Activated CD4-positive, alpha-beta T cell treated with anti-CD3 and anti-CD28 coated beads for 36 hours (primary cell): ENCODE measurements at regions of chr3 and their contacts with region 1.

Region 1: GRCh38 chr3:196711838-196712513 is at the starts of genes CEP19 and PIGX:
- DNase-seq: peak; percentile 94
- ATAC-seq: peak; percentile 87
- H3K4me3 Mint-ChIP-seq: peak within 1 kb of the TSS; percentile 83
- H3K27ac Mint-ChIP-seq: peak within 1 kb of the TSS; percentile 96
- H3K4me1 Mint-ChIP-seq: peaks cover 33% of the 10 kb centered on the region
- H3K27me3 Mint-ChIP-seq: no peaks in the 10 kb centered on the region
- total RNA-seq, gene CEP19: 4.7 to 5.6 TPM
- total RNA-seq, gene PIGX: 37.8 to 42.2 TPM

Region 2: GRCh38 chr3:196432137-196432879 is 279.7 kb before region 1 on chr3 and contains the start of gene UBXN7:
- CTCF ChIA-PET with region 1: no interaction called
- POLR2A ChIA-PET with region 1: no interaction called
- intact Hi-C with region 1: loop called in 1 of 2 experiments (anchors 5 kb)
- DNase-seq: peak; percentile 98
- ATAC-seq: peak; percentile 89
- H3K4me3 Mint-ChIP-seq: peak within 1 kb of the TSS; percentile 79
- H3K27ac Mint-ChIP-seq: peak within 1 kb of the TSS; percentile 95
- H3K4me1 Mint-ChIP-seq: peaks cover 20% of the 10 kb centered on the region
- H3K27me3 Mint-ChIP-seq: no peaks in the 10 kb centered on the region
- total RNA-seq, gene UBXN7: 67.2 to 102 TPM

Region 3: GRCh38 chr3:196609343-196609775 is 102.6 kb before region 1 on chr3:
- CTCF ChIA-PET with region 1: interaction called, 4 read pairs
- POLR2A ChIA-PET with region 1: no interaction called
- intact Hi-C with region 1: loop called in 1 of 2 experiments (anchors 1 kb)
- DNase-seq: peak; percentile 98
- ATAC-seq: peak; percentile 93
- H3K4me3 Mint-ChIP-seq: peak overlapping the region; percentile 39
- H3K27ac Mint-ChIP-seq: peak overlapping the region; percentile 76
- H3K4me1 Mint-ChIP-seq: peaks cover 28% of the 10 kb centered on the region
- H3K27me3 Mint-ChIP-seq: no peaks in the 10 kb centered on the region

Region 4: GRCh38 chr3:196639483-196640296 is 72.3 kb before region 1 on chr3 and contains the start of gene NRROS:
- CTCF ChIA-PET with region 1: interaction called, 3 read pairs
- POLR2A ChIA-PET with region 1: no interaction called
- intact Hi-C with region 1: loop called in 1 of 2 experiments (anchors 1 kb)
- DNase-seq: peak; percentile 86
- ATAC-seq: peak; percentile 65
- H3K4me3 Mint-ChIP-seq: peak within 1 kb of the TSS; percentile 81
- H3K27ac Mint-ChIP-seq: peak within 1 kb of the TSS; percentile 98
- H3K4me1 Mint-ChIP-seq: peaks cover 62% of the 10 kb centered on the region
- H3K27me3 Mint-ChIP-seq: no peaks in the 10 kb centered on the region
- total RNA-seq, gene NRROS: 19.6 to 19.7 TPM

Region 5: GRCh38 chr3:196739671-196740480 is 27.9 kb after region 1 on chr3 and contains the start of gene PAK2:
- CTCF ChIA-PET with region 1: interaction called, 3 read pairs
- POLR2A ChIA-PET with region 1: interaction called, 10 read pairs
- intact Hi-C with region 1: loop called (anchors 1 kb)
- DNase-seq: peak; percentile 94
- ATAC-seq: peak; percentile 92
- H3K4me3 Mint-ChIP-seq: peak within 1 kb of the TSS; percentile 93
- H3K27ac Mint-ChIP-seq: peak within 1 kb of the TSS; percentile 99
- H3K4me1 Mint-ChIP-seq: peaks cover 25% of the 10 kb centered on the region
- H3K27me3 Mint-ChIP-seq: no peaks in the 10 kb centered on the region
- total RNA-seq, gene PAK2: 57.6 to 82.2 TPM

Region 6: DNA sequence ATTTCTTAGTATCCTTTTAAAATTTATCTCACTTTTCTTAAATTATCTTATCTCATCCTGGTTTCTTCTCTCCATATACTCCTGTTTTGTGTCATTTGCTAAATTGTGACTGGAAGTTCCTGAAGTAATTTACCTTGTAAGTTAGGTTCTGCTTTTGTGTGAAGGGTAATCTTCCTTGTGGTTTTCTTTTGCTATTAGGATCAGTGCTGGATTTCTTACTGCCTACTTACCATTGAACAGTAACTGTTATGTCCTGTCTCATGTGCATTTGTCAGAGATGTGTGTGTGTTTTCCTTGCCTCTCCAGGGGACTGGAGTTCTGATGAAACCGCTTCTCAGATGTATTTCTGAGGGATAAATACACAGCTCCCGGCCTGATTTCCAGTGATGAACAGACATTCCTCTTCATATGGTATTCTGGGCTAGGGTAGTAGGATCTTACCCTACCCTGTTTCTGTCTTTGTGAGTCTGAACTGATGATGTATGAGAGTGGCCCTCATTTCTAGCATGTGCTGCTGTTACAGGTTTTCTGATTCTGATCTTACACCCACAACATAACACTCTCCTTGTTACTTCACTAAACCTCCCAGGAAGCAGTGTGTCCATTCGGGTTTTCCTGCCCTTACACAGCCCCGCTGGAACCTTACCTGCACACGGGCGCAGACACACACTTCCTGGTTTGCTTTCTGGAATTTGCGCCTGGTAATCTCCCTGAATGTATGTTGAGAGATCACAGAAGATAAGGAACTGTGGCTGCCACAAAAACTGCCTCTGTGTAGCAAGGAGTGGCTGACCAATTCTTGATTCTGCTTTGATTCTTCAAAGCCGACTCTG is 42.3 kb after region 1 on chr3:
- CTCF ChIA-PET with region 1: no interaction called
- POLR2A ChIA-PET with region 1: no interaction called
- intact Hi-C with region 1: no loop called
- DNase-seq: no peak
- ATAC-seq: no peak
- H3K4me3 Mint-ChIP-seq: no peak overlapping the region
- H3K27ac Mint-ChIP-seq: peak overlapping the region; percentile 38
- H3K4me1 Mint-ChIP-seq: peaks cover 55% of the 10 kb centered on the region
- H3K27me3 Mint-ChIP-seq: no peaks in the 10 kb centered on the region

Region 7: DNA sequence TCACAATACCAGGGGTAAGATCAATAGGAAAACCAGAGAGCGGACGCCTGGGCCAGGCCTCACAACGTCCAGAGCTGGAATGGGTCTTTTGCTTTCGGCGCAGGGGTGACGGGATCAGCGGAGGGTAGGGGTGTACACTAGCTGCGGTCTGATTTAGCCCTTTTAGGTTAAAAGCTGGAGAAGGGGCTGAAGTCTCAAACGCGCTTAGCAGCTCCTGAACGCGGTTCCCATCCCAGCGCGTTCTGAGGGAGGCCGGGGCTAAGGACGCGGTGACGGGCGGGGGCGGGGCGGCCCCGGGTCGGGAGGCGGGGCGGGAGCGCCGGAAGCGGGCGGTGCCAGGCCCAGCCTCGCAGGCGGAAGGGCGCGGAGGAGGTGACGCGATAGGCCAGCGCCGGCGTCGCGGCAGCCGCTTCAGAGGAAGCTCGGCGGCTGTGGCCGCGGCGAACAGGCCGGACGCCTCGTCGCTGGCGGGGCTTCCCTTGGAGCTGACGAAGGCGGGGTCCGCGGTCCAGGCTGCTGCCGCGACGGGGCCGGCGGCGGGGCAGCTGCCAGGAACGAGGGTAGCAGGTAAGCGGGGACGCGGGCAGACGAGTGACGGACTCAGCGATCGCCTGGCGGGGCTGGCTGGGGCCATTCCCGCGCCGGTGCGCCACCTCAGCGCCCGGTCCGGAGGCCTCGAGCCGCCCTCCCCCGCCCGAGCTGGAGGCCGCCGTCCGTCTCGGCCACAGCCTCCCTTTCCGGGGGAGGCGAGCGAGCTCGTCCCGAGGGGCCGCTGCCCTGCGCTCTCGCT is 155.7 kb after region 1 on chr3 and contains the start of gene SENP5:
- CTCF ChIA-PET with region 1: interaction called, 3 read pairs
- POLR2A ChIA-PET with region 1: no interaction called
- intact Hi-C with region 1: loop called in 1 of 2 experiments (anchors 1 kb)
- DNase-seq: peak; percentile 95
- ATAC-seq: peak; percentile 96
- H3K4me3 Mint-ChIP-seq: peak within 1 kb of the TSS; percentile 99
- H3K27ac Mint-ChIP-seq: peak within 1 kb of the TSS; percentile 95
- H3K4me1 Mint-ChIP-seq: peaks cover 24% of the 10 kb centered on the region
- H3K27me3 Mint-ChIP-seq: no peaks in the 10 kb centered on the region
- total RNA-seq, gene SENP5: 27.7 to 33.0 TPM

Region 8: GRCh38 chr3:197791113-197791891 is 1079.3 kb after region 1 on chr3 and contains the start of gene LRCH3:
- CTCF ChIA-PET with region 1: no interaction called
- POLR2A ChIA-PET with region 1: no interaction called
- intact Hi-C with region 1: loop called in 1 of 2 experiments (anchors 5 kb)
- DNase-seq: peak; percentile 88
- ATAC-seq: peak; percentile 70
- H3K4me3 Mint-ChIP-seq: peak within 1 kb of the TSS; percentile 97
- H3K27ac Mint-ChIP-seq: peak within 1 kb of the TSS; percentile 97
- H3K4me1 Mint-ChIP-seq: peaks cover 48% of the 10 kb centered on the region
- H3K27me3 Mint-ChIP-seq: no peaks in the 10 kb centered on the region
- total RNA-seq, gene LRCH3: 43.6 to 77.5 TPM